A549 (cell line): ENCODE measurements at regions of chr15 and their contacts with region 1.

Region 1: DNA sequence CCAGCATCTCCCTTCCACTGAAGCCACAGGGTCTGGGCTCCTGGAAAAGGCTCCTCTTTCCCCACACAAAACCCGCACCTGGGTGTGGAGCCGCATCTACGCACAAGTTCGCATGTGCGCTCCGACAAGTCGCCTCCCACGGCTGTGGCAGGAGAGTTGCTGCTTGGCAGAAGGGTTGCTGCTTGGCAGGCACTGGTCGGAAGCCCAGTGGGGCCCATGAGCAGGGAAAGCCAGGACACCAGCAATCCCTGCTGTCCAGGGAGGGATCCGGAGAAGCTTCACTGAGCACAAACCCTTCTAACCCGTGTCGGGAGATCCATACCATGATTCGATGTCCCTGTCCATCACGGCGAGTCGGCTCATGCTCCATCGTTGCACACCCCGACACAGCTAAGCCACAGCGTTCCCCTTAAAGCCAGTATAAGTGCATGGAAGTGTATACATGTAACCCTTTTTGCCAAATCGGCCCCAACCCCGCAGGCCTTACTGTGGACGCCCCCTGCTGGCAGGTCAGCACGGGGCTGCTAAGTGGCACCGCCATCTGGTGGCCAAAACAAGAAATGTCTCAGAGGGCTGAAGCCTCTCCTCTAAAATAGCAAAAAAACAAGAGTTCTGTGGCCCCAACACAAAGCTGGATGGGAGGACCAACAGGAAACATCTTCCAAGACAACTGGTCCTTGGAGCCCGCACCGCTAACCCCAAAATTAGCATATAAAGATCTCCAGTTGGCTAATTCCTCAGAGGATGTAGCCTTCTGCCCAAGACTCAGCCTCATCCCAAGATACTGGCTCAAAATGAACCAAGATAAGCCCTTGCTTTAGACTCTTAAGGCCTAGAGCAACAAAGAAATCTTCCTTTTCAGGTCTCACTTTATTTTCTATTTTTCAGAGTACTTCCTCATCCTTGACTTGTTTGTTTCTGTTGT is 8.3 kb downstream of the ANKRD63 start:
- DNase-seq: peak; percentile 40 to 78
- ATAC-seq: peak; percentile 31 to 63; a peak in 5 of 6 replicates
- H3K4me3 ChIP-seq: no peak overlapping the region
- H3K27ac ChIP-seq: no peak overlapping the region
- H3K4me1 ChIP-seq: no peaks in the 10 kb centered on the region
- CTCF ChIP-seq: peak; percentile 100
- EP300 ChIP-seq: no peak
- POLR2A ChIP-seq: no peak
- RAD21 ChIP-seq: peak; percentile 88 to 89

Region 2: DNA sequence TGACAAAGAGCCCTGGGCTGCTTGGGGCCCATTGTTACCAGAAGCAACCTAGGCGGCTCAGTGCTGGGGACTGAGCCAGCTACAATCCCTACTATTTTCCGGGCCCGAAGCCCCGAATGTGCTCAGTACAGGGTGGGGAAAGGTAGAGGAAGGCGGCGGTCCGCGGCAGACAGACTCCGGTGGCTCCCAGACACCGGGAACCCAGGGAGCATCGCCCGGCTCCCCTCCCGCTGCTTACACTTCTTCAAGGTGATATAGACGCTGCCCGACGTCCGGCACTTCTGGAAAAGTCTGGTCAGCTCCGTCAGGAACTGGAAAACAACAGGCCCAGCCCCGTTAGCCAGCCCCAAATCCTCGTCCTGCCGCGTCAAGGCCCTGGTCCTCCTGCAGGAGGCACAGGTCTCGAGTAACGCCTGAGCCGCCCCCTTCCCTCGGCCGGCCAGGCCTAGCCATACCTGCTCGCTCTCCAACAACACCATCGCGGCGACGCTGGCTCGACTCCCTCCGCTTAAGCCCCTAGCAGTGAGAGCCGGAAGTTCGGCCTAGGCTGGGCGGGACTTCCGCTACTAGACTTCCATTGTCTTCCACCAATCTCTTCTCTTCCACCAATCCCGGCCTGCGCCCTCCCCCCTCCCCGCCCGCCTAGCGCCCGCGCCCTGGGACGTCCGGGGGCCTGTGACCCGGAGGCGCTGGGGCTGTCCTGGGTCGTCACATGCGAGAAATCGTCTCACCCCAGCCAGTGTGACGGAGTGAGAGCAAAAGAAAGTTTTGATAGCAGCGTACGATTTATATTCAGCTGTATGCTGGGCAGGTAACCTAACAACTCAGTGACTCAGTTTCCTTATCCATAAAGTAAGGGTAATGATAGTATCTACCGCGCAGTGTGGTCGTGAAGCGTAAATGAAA is 235.7 kb before region 1 on chr15 and contains the start of gene SRP14:
- CTCF ChIA-PET with region 1: interaction called, 102 read pairs
- POLR2A ChIA-PET with region 1: no interaction called
- DNase-seq: peak; percentile 78 to 87
- ATAC-seq: peak; percentile 99
- H3K4me3 ChIP-seq: peak within 1 kb of the TSS; percentile 99
- H3K27ac ChIP-seq: peak within 1 kb of the TSS; percentile 89
- H3K4me1 ChIP-seq: peaks cover 10% of the 10 kb centered on the region; the same call in 1 of the 3 replicates
- CTCF ChIP-seq: no peak
- EP300 ChIP-seq: no peak
- POLR2A ChIP-seq: peak; percentile 87
- RAD21 ChIP-seq: no peak
- polyA plus RNA-seq, gene SRP14: 216 and 306 TPM in 2 replicates

Region 3: DNA sequence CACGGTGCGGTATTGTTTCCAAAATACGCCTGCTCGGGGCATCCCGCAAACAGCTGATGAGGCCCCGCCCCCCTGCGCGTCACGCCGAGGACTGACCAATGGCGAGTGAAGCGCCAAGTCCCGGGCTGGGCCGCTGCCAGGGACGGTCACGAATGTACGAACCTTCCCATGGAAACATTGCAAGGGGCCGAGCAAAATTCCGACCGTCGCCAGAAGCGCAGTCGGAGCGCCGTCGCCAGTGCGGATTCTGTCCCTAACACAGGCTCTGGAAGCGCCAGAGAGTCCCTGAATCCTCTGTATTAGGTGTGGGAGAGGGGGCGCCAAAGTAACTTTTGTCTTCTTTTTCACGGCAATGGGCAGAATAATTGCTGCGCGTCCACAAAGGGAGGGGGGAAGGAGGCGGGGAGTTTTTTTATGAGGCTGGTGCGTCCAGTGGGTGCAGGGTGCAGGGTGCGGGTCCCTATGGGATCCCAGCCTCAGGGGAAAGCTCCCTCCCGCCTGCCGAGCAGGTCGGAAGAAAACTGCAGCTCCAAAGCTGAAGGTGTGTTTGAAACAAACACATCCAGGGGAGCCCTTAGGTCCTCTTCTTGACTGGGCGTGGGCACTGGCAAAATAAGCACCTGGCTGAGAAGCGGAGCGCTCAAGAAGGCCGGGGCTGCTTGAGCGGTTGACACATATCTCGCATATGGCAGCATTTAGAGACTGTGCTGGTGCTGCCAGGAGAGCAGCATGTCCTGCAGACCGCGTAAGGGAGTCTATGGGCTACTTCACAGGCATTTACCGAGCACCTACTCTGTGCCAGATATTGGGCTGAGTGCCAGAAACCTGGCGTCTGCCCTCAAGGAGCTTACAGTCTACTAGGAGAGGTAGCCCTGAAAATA is 165.5 kb before region 1 on chr15 and contains the start of gene BMF:
- CTCF ChIA-PET with region 1: interaction called, 10 read pairs
- POLR2A ChIA-PET with region 1: no interaction called
- DNase-seq: peak; percentile 85 to 96
- ATAC-seq: peak; percentile 83 to 87
- H3K4me3 ChIP-seq: peak within 1 kb of the TSS; percentile 57
- H3K27ac ChIP-seq: peak within 1 kb of the TSS; percentile 59 to 82; a peak in 5 of 6 replicates
- H3K4me1 ChIP-seq: peaks cover 31% of the 10 kb centered on the region
- CTCF ChIP-seq: peak; percentile 40
- EP300 ChIP-seq: no peak
- POLR2A ChIP-seq: no peak
- RAD21 ChIP-seq: peak; percentile 17 to 36; a peak in 2 of 5 replicates
- polyA plus RNA-seq, gene BMF: 1.4 and 2.1 TPM in 2 replicates

Region 4: GRCh38 chr15:40232625-40233070 is 42.0 kb before region 1 on chr15:
- CTCF ChIA-PET with region 1: interaction called, 144 read pairs
- POLR2A ChIA-PET with region 1: no interaction called
- DNase-seq: no peak
- ATAC-seq: no peak
- H3K4me3 ChIP-seq: no peak overlapping the region
- H3K27ac ChIP-seq: no peak overlapping the region
- H3K4me1 ChIP-seq: no peaks in the 10 kb centered on the region
- CTCF ChIP-seq: no peak
- EP300 ChIP-seq: no peak
- POLR2A ChIP-seq: no peak
- RAD21 ChIP-seq: no peak

Region 5: DNA sequence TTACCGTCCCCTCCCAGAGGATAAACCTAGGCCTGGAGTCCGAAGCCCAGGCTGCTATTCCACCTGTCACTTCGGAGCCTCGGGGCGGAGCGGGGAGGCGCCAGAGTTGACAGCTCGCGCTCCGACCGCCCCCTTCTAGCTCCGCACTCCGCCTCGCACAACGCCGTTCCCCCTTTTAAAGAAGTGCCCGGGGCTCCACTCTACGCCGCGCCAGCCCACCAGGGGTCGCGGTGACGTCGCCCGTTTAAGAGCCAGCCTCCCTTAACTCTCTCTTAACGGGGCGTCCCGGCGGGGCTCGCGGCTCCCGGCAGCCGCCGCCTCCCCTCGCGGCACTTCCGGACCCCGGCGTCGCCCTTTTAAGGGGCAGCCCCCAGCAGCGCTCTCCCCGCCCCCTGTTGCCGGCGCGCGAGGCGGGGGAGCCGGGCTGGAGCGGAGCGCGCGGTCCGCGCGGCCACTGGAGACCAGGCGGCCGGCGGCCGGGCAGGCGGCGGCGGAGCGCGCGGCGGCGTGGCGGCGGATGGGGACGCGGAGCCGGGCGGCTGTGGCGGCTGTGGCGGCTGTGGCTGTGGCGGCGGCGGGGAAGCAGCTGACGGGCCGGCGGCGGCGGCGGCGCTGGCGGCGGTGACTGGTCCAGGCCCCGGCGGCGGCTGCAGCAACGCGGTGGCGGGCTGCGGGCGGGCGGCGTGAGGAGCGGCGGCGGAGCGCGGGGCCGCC is 48.8 kb after region 1 on chr15 and contains the start of gene INAFM2:
- CTCF ChIA-PET with region 1: interaction called, 203 read pairs
- POLR2A ChIA-PET with region 1: no interaction called
- DNase-seq: peak; percentile 66 to 77
- ATAC-seq: peak; percentile 74 to 92
- H3K4me3 ChIP-seq: peak within 1 kb of the TSS; percentile 75
- H3K27ac ChIP-seq: peak within 1 kb of the TSS; percentile 73 to 90
- H3K4me1 ChIP-seq: peaks cover 9% of the 10 kb centered on the region; the same call in 1 of the 3 replicates
- CTCF ChIP-seq: peak; percentile 21; the same call in 2 of the 3 replicates
- EP300 ChIP-seq: no peak
- POLR2A ChIP-seq: 0 out of 2 replicates have a peak, but pooled peaks have one; percentile 17
- RAD21 ChIP-seq: no peak
- polyA plus RNA-seq, gene INAFM2: 2.8 and 3.5 TPM in 2 replicates

Region 6: DNA sequence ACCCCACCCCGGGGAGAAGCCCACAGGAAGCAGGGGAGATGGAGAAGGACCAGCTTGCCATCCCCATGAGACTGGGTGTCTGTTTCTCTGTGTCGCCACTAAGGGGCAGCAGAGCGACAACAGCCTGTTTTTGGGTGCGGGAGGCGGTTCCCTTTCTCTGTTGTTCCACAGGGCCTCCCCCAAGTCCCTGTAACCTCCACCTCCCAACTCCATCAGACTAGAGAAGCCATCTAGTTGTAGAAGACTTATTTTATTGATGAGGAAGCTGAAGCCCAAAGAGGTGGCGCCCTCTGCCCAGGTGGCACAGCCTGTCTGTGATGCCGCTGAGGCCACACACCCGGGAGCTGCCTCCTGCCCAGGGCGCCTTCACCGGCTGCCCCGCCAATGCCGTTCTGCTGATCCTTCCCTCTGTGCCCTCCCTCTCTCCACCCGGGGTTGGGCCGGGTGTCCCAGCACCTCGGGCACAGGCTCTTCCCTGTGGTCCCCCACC is 70.1 kb after region 1 on chr15:
- CTCF ChIA-PET with region 1: interaction called, 59 read pairs
- POLR2A ChIA-PET with region 1: no interaction called
- DNase-seq: peak; percentile 55 to 61
- ATAC-seq: peak; percentile 48 to 63; a peak in 5 of 6 replicates
- H3K4me3 ChIP-seq: no peak overlapping the region
- H3K27ac ChIP-seq: peak overlapping the region; percentile 16 to 71; a peak in 3 of 6 replicates
- H3K4me1 ChIP-seq: peaks cover 44% of the 10 kb centered on the region
- CTCF ChIP-seq: peak; percentile 51
- EP300 ChIP-seq: no peak
- POLR2A ChIP-seq: no peak
- RAD21 ChIP-seq: peak; percentile 51 to 64; a peak in 4 of 5 replicates